ENCODE measurements at regions of chr1 and their contacts with region 1.

Region 1: DNA sequence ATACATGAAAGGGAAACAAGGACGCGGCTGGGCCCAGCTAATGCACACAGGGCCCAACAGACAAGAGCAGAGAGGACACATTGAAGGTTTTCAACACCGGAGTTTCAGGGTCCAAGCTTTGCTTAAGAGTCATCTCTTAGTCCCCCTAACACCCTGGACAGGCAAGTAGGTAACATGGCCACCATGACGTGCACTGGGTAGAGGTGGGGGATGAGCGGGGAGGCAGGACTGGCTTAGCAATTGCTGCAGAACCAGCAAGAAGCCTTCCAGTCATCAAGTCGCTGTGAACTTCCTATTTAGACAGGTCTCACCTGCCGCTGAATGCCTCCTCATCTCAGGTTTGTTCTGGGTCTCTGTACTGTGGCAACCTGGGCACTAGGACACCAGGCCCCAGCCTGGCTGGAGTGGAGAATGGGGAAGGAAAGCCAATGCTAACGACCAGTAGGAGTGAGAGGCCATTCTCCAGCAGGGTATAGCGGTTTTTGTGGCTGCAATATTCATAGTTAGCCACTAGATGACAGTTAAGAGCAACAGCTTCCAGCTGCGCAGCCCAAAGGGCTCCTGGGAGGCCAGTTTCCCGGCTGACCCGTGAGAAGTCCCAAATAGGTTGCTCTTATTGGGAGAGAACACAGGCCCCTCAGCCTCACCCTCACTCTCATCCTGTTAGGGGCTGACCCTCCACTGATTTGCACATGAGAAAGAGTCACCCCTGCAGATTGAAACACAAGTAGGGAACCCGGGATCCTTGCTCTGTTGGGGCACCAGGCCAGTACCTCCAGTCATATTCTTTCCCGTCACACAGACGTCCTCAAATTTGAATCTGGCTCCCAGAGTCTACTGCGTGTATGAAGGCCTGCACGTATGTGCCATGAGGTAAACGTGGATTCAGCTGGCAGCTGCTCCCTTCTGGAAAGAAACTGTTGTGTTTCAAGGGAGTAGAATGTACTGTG is 6.0 kb upstream of the PIGC start:
- DNase-seq: peak; percentile 27
- H3K4me3 ChIP-seq: no peak overlapping the region
- H3K27ac ChIP-seq: no peak overlapping the region
- H3K4me1 ChIP-seq: peaks cover 35% of the 10 kb centered on the region
- H3K27me3 ChIP-seq: no peaks in the 10 kb centered on the region
- CTCF ChIP-seq: peak; percentile 83 to 86

Region 2: DNA sequence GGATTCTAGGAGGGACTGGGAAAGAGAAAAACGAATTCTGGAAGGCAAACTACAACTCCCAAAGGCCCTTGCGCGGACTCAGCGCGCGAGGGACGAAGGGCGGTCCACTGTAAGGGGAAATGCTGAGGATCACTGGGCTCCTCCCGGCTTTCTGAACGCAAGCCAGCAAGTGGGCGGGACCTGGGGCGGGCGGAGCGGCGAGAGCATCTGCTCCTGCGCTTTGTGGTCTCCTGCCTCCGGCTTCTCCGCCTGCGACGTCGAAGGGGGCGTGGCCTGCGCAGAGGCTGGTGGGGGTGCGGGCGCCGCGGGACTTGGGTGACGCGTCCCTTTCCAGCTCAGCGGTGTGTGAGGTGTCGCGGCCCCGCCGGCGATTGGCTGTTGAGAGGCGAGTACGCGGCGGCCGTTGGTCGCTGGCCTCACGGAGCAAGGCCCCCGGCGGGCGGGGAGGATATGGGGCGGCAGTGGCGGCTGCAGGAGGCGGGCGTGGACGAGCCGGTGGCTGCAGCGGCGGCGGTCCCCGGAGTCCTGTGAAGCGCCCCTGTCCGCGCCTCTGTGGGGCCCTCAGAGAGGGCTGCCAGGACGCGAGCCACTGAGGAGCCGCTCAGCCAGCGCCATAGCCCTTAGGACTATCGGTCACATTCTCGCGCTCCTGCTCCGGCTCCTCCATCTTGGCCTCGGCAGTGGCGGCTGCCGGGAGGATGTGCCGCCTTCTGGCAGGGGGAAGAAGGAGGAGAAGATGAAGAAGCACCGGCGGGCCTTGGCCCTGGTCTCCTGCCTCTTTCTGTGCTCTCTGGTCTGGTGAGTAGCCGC is 83.0 kb after region 1 on chr1 and contains the start of gene SUCO:
- CTCF ChIA-PET with region 1: no interaction called
- dilution Hi-C with region 1: no loop called
- in situ Hi-C with region 1: no loop called
- intact Hi-C with region 1: loop called (anchors 1 kb)
- DNase-seq: peak; percentile 100
- H3K4me3 ChIP-seq: peak within 1 kb of the TSS; percentile 94 to 97 (median 95)
- H3K27ac ChIP-seq: peak within 1 kb of the TSS; percentile 90
- H3K4me1 ChIP-seq: peaks cover 20% of the 10 kb centered on the region
- H3K27me3 ChIP-seq: no peaks in the 10 kb centered on the region
- CTCF ChIP-seq: peak in 1 of 2 donors; percentile 28
- total RNA-seq, gene SUCO: 31.9 to 36.2 TPM

Region 3: DNA sequence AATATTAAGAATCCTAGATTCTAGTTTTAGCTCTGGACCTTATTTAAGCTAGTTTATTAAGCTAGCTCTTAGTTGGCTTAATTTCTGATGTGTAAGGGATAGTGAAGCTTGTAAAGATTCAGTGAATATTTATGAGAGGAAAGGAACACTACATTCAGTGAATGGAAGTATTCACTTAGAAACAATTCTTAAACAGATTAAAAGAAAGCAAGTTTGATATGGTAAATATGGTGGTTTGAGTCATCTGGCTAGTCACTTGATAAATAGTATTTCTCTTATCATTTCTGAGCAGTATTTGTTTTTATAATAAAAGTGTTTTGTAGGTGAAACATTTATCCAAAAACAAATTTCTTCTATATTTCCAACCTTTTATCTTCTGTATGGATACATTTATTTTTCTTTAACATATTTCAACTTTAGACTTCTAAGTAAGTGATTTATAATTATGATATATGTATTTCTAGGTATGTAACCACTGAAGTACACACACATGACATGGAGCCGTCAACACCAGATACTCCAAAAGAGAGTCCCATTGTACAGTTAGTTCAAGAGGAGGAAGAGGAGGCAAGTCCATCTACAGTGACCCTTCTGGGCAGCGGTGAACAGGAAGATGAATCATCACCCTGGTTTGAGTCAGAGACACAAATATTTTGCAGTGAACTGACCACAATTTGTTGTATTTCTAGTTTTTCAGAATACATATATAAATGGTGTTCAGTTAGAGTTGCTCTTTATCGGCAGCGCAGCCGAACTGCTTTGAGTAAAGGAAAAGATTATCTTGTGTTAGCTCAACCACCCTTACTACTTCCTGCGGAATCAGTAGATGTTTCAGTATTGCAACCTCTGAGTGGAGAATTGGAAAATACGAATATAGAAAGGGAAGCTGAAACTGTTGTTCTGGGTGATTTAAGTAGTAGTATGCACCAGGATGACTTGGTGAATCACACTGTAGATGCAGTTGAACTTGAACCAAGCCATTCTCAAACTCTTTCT is 138.7 kb after region 1 on chr1:
- CTCF ChIA-PET with region 1: no interaction called
- dilution Hi-C with region 1: no loop called
- in situ Hi-C with region 1: no loop called
- intact Hi-C with region 1: loop called (anchors 2 kb)
- DNase-seq: peak; percentile 86
- H3K4me3 ChIP-seq: no peak overlapping the region
- H3K27ac ChIP-seq: peak overlapping the region; percentile 41
- H3K4me1 ChIP-seq: peaks cover 38% of the 10 kb centered on the region
- H3K27me3 ChIP-seq: no peaks in the 10 kb centered on the region
- CTCF ChIP-seq: no peak

Region 4: DNA sequence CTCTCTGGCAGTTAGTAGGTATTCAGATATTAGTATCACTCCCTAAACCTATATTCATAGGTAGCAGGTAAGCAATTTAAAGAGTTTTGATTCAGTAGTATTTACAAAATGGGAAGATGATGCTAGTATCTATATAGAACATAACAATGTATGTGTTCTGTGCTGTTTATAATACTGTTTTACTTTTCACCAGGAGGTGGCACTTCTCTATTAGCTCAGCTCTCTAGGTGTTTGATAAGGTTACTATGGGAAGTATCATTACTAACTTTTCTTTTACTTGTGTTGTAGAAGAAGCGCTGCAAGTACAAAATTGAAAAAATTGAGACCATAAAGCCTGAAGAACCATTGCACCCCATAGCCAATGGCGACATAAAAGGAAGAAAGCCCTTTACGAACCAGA is 159.7 kb after region 1 on chr1:
- CTCF ChIA-PET with region 1: no interaction called
- dilution Hi-C with region 1: no loop called
- in situ Hi-C with region 1: no loop called
- intact Hi-C with region 1: loop called (anchors 1 kb)
- DNase-seq: peak; percentile 19
- H3K4me3 ChIP-seq: no peak overlapping the region
- H3K27ac ChIP-seq: no peak overlapping the region
- H3K4me1 ChIP-seq: peaks cover 4% of the 10 kb centered on the region
- H3K27me3 ChIP-seq: no peaks in the 10 kb centered on the region
- CTCF ChIP-seq: peak; percentile 39 to 56

Region 5: GRCh38 chr1:172719694-172720138 is 269.9 kb after region 1 on chr1:
- CTCF ChIA-PET with region 1: no interaction called
- dilution Hi-C with region 1: loop called (anchors 25 kb)
- in situ Hi-C with region 1: loop called (anchors 10 to 25 kb)
- intact Hi-C with region 1: loop called (anchors 1 kb)
- DNase-seq: no peak
- H3K4me3 ChIP-seq: peak overlapping the region in 2 of 3 experiments; percentile 12 to 24
- H3K27ac ChIP-seq: peak overlapping the region; percentile 54
- H3K4me1 ChIP-seq: peaks cover 44% of the 10 kb centered on the region
- H3K27me3 ChIP-seq: no peaks in the 10 kb centered on the region
- CTCF ChIP-seq: peak; percentile 65 to 78